Gastrocnemius medialis (tissue), 4 donors: ENCODE measurements at regions of chr10 and their contacts with region 1.

Region 1: GRCh38 chr10:21533467-21534279 is at the start of gene MLLT10:
- DNase-seq: peak; percentile 89 to 95
- ATAC-seq: peak; percentile 74 to 75
- H3K4me3 ChIP-seq: peak within 1 kb of the TSS; percentile 77 to 98 (median 88)
- H3K27ac ChIP-seq: peak within 1 kb of the TSS; percentile 90 to 100 (median 98)
- H3K4me1 ChIP-seq: peaks cover 25% of the 10 kb centered on the region in 2 donors
- H3K27me3 ChIP-seq: no peaks in the 10 kb centered on the region
- CTCF ChIP-seq: peak; percentile 33 to 54 (median 46)
- POLR2A ChIP-seq: peak; percentile 85 to 90
- total RNA-seq, gene MLLT10: 13.6 to 26.6 (median 21.6) TPM

Region 2: DNA sequence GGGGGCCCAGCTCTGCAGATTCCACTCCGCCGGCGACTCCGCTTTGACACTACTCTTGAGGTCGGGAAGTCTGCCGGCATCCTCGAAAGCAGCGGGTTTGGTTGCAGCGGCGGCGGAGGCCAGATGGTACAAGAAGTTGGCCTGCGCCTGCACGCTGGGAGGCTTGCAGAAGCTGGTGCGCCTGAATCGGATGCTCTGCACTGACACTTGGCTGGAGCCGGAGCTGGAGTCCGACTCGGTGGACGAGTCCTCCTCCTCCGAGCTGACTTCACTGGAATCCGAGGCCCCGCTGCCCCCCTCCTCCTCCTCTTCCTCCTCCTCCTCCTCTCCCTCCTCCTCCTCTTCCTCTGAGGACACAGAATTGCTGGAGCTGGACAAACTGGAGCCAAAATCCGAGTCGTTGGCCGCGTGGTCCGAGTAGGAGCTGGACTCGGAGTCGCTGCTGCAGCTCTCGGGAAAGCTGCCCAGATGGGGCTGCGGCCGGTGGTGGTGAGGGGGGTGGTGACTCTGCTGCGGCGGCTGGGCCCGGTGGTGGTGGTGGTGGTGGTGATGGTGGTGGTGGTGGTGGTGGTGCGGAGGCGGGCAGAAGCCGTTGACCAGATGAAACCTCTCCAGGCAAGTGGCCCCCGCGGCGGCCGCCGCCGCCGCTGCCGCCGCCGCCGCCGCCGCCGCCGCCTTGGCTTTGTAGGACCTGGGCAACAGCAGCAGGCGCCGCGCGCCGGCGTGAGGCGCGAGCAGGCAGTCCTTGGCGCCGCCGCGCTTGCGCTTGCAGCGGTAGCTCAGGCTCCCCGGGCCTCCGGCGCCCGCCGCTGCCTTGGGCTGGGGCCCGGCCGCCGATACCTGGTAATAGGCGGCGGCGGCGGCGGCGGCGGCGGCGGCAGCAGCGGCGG is 17.2 kb before region 1 on chr10:
- in situ Hi-C with region 1: no loop called
- intact Hi-C with region 1: loop called (anchors 2 kb)
- DNase-seq: peak; percentile 82 to 86
- ATAC-seq: peak; percentile 61 to 64
- H3K4me3 ChIP-seq: peak overlapping the region; percentile 63 to 72 (median 67)
- H3K27ac ChIP-seq: peak overlapping the region; percentile 68 to 98 (median 77)
- H3K4me1 ChIP-seq: peaks cover 33 to 34% of the 10 kb centered on the region in 2 donors
- H3K27me3 ChIP-seq: peaks cover 0 to 8% (median 4%) of the 10 kb centered on the region in 3 donors
- CTCF ChIP-seq: no peak
- POLR2A ChIP-seq: peak in 1 of 2 donors; percentile 23